Activated CD4-positive, alpha-beta memory T cell treated with anti-CD3 and anti-CD28 coated beads, Interleukin-2, amount 10 ng/mL, durations not matched to agents 7 days and 5 days (primary cell): ENCODE measurements at regions of chr2 and their contacts with region 1.

Region 1: GRCh38 chr2:33620-34019 is 12.7 kb downstream of the FAM110C start:
- DNase-seq: peak; percentile 79
- H3K4me3 Mint-ChIP-seq: peak overlapping the region; percentile 36
- H3K27ac Mint-ChIP-seq: peak overlapping the region; percentile 93
- H3K4me1 Mint-ChIP-seq: peaks cover 81% of the 10 kb centered on the region
- H3K27me3 Mint-ChIP-seq: no peaks in the 10 kb centered on the region

Region 2: GRCh38 chr2:46471-47345 is 13.1 kb after region 1 on chr2 and contains the start of gene FAM110C:
- CTCF ChIA-PET with region 1: interaction called, 5 read pairs
- POLR2A ChIA-PET with region 1: interaction called, 13 read pairs
- DNase-seq: peak; percentile 64
- H3K4me3 Mint-ChIP-seq: peak within 1 kb of the TSS; percentile 71
- H3K27ac Mint-ChIP-seq: peak within 1 kb of the TSS; percentile 12
- H3K4me1 Mint-ChIP-seq: peaks cover 34% of the 10 kb centered on the region
- H3K27me3 Mint-ChIP-seq: peaks cover 48% of the 10 kb centered on the region
- total RNA-seq, gene FAM110C: 4.8 to 5.1 TPM

Region 3: DNA sequence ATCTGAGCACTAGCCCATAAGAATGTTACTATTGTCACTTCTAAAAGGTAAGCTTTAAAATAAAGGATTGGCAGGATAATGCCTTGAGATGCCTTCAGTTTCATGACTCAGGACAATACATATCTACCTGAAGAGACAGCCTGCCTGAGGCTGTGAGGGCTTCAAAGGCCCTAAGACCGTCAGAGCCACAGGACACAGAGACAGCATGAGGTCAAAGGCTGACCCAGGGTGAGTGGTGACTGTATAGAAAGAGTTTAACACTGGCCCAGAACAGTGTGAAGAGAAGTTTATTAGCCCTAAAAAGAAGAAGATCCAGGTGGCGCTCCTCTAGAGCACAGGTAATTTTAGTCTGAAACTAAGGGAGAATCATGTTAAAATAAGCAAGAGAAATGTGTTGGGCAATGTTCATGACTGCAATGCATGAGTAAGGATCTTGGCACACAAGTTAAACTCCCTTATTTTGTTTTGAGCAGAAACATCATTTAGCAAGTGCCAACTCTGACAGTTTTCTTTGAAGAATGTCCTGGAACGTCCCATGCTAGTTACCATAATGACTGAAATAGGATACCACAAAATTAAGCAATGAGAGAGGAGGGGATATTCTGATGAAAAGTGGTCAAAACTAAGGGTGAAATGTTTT is 90.7 kb after region 1 on chr2:
- CTCF ChIA-PET with region 1: no interaction called
- POLR2A ChIA-PET with region 1: no interaction called
- DNase-seq: no peak
- H3K4me3 Mint-ChIP-seq: no peak overlapping the region
- H3K27ac Mint-ChIP-seq: no peak overlapping the region
- H3K4me1 Mint-ChIP-seq: no peaks in the 10 kb centered on the region
- H3K27me3 Mint-ChIP-seq: peaks cover 6% of the 10 kb centered on the region

Region 4: GRCh38 chr2:151553-152334 is 118.1 kb after region 1 on chr2:
- CTCF ChIA-PET with region 1: no interaction called
- POLR2A ChIA-PET with region 1: no interaction called
- DNase-seq: no peak
- H3K4me3 Mint-ChIP-seq: no peak overlapping the region
- H3K27ac Mint-ChIP-seq: no peak overlapping the region
- H3K4me1 Mint-ChIP-seq: no peaks in the 10 kb centered on the region
- H3K27me3 Mint-ChIP-seq: peaks cover 12% of the 10 kb centered on the region

Region 5: DNA sequence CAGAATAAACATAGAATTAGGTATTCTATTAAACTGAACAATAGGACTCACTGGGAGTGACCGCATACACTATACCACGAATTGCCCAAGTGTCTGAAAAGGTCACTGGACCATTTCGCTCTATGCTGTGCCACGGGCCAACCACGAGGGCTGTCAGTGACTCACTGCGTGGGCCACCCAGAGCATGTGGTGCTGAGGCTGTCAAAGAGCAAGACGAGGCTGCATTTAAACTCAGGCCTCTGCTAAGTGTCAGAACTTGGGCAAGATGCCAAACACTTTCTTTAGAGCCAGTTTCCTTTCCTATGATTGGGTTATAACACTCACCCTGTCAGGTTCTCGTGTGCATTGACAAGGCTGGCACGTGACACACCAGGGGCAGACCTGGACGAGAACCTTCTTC is 132.8 kb after region 1 on chr2:
- CTCF ChIA-PET with region 1: no interaction called
- POLR2A ChIA-PET with region 1: no interaction called
- DNase-seq: no peak
- H3K4me3 Mint-ChIP-seq: no peak overlapping the region
- H3K27ac Mint-ChIP-seq: no peak overlapping the region
- H3K4me1 Mint-ChIP-seq: peaks cover 6% of the 10 kb centered on the region
- H3K27me3 Mint-ChIP-seq: peaks cover 20% of the 10 kb centered on the region

Region 6: DNA sequence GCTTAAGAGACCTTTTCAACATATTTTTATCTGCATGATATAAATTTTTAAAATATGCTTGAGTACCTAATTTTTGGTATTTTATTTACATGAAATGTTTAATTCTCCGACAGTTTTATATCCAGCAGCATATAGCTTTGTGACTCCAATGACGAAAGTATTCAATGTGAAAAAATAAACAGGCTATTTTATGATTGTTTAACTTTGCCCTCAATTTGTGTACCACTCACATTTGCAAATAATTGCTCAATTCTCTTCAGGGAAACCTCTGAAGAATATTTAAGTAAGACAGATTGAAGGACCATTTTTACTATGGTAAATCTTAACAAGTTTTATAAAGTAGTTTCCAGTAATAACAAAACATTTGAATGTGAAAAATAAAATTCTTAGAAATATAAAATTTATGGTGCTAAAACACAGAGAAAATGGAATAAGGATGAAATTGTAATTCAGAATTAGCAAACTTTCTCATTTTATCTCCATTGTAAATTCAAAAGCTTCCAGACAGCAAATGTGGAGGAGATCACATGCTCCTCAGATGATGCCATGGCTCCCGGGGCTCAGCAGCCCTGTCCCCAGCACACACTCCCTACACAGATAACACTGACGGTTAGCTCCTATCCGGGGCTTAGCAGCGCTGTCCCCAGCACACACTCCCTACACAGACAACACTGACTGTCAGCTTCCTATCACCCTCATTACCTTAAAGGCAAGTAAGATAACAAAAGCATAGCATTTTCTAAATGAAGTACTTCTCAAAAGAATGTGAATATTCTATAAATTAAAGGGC is 190.5 kb after region 1 on chr2:
- CTCF ChIA-PET with region 1: no interaction called
- POLR2A ChIA-PET with region 1: no interaction called
- DNase-seq: no peak
- H3K4me3 Mint-ChIP-seq: no peak overlapping the region
- H3K27ac Mint-ChIP-seq: no peak overlapping the region
- H3K4me1 Mint-ChIP-seq: peaks cover 2% of the 10 kb centered on the region
- H3K27me3 Mint-ChIP-seq: no peaks in the 10 kb centered on the region